Right lobe of liver (tissue), 6 donors: ENCODE measurements at regions of chr19 and their contacts with region 1.

Region 1: DNA sequence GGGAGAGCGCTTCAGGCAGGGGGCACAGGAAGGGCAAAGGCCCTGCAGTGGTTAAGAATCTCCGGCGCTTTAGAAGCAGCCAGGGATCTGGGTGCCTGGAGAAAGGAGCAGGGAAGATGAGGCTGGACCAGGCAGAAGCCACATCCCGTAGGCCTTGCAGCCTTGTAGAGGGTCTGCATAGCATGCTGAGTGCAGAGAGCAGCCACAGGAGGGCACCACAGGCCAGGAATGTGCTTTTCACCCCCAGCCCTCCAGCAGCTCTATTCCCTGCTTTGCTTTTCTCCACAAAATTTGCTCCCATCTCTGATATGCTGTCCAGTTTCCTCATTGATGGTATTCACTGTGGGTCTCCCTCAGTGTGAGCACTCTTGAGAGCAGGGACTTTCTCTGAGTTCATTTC is 5.7 kb downstream of the WDR62 start:
- DNase-seq: peak in 2 of 3 donors; percentile 52 to 56
- ATAC-seq: peak; percentile 72 to 82 (median 80)
- H3K4me3 ChIP-seq: no peak overlapping the region
- H3K27ac ChIP-seq: no peak overlapping the region
- H3K4me1 ChIP-seq: peaks cover 0 to 13% (median 3%) of the 10 kb centered on the region in 4 donors
- H3K27me3 ChIP-seq: no peaks in the 10 kb centered on the region
- CTCF ChIP-seq: peak; percentile 42 to 55 (median 50)
- POLR2A ChIP-seq: no peak

Region 2: GRCh38 chr19:36009220-36009619 is 51.2 kb before region 1 on chr19:
- intact Hi-C with region 1: no loop called
- DNase-seq: peak; percentile 75 to 79 (median 79)
- ATAC-seq: peak; percentile 38 to 68 (median 52)
- H3K4me3 ChIP-seq: peak overlapping the region; percentile 54 to 71 (median 69)
- H3K27ac ChIP-seq: peak overlapping the region in 2 of 3 donors; percentile 51 to 78
- H3K4me1 ChIP-seq: peaks cover 0 to 20% (median 2%) of the 10 kb centered on the region in 4 donors
- H3K27me3 ChIP-seq: no peaks in the 10 kb centered on the region
- CTCF ChIP-seq: no peak
- POLR2A ChIP-seq: no peak

Region 3: DNA sequence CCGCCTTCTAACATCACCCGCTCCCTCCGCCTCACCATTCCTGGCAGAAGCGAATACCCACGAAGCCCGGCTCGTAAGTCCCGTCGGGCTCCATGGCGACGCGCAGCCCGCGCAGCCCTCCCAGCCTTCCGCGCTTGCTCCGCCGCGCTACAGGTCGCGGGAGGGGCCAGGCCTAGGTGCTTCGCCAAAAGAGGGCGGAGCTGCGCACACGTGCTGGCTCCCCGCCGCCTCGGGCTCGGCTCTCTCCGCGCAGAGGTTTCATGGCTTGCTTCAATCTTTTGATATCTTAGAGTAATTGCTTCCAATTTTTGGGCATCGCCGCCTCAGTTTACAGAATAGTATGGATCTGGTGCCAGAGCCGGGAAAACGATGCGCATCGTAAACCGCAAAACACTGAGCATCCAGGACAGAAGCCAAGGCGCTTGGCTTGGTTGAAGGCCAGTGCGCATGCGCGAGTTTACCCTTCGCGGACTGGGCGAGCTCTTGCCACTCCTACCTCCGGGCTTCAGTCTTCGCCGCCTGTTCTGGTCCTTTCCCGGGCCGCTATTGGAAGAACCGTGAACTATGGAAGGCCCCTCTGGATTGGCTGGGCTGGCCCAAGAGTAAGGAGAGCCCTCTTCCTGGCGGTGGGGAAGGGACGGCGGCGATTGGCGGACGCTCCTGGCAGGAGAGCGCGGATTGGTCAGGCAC is 54.5 kb after region 1 on chr19 and contains the start of gene POLR2I:
- intact Hi-C with region 1: loop called in 1 of 2 experiments (anchors 10 kb)
- DNase-seq: peak; percentile 99 to 100 (median 100)
- ATAC-seq: peak; percentile 91 to 96 (median 92)
- H3K4me3 ChIP-seq: peak within 1 kb of the TSS; percentile 84 to 91 (median 88)
- H3K27ac ChIP-seq: peak within 1 kb of the TSS; percentile 56 to 73 (median 59)
- H3K4me1 ChIP-seq: peaks cover 0 to 12% (median 3%) of the 10 kb centered on the region in 4 donors
- H3K27me3 ChIP-seq: no peaks in the 10 kb centered on the region
- CTCF ChIP-seq: no peak
- POLR2A ChIP-seq: peak; percentile 53
- total RNA-seq, gene POLR2I: 27.3 to 34.4 (median 29.9) TPM